ENCODE measurements at regions of chr1 and their contacts with region 1.

Region 1: GRCh38 chr1:226547754-226548191 is 791 bp upstream of the STUM start:
- DNase-seq: peak; percentile 88 to 95
- ATAC-seq: peak; percentile 78 to 92
- H3K4me3 ChIP-seq: peak overlapping the region; percentile 45; the same call in 2 of the 3 replicates
- H3K27ac ChIP-seq: no peak overlapping the region
- H3K4me1 ChIP-seq: peaks cover 19% of the 10 kb centered on the region
- CTCF ChIP-seq: peak; percentile 97
- EP300 ChIP-seq: no peak
- POLR2A ChIP-seq: no peak
- RAD21 ChIP-seq: peak; percentile 80 to 86

Region 2: GRCh38 chr1:226344441-226345259 is 203.1 kb before region 1 on chr1:
- CTCF ChIA-PET with region 1: no interaction called
- POLR2A ChIA-PET with region 1: no interaction called
- DNase-seq: no peak
- ATAC-seq: no peak
- H3K4me3 ChIP-seq: no peak overlapping the region
- H3K27ac ChIP-seq: no peak overlapping the region
- H3K4me1 ChIP-seq: no peaks in the 10 kb centered on the region
- CTCF ChIP-seq: no peak
- EP300 ChIP-seq: no peak
- POLR2A ChIP-seq: no peak
- RAD21 ChIP-seq: no peak

Region 3: GRCh38 chr1:226424228-226425003 is 123.4 kb before region 1 on chr1:
- CTCF ChIA-PET with region 1: interaction called, 36 read pairs
- POLR2A ChIA-PET with region 1: no interaction called
- DNase-seq: peak; percentile 42 to 49
- ATAC-seq: peak; percentile 83 to 91; a peak in 5 of 6 replicates
- H3K4me3 ChIP-seq: no peak overlapping the region
- H3K27ac ChIP-seq: no peak overlapping the region
- H3K4me1 ChIP-seq: no peaks in the 10 kb centered on the region
- CTCF ChIP-seq: peak; percentile 68
- EP300 ChIP-seq: no peak
- POLR2A ChIP-seq: no peak
- RAD21 ChIP-seq: peak; percentile 71 to 73

Region 4: GRCh38 chr1:226441629-226442028 is 106.1 kb before region 1 on chr1:
- CTCF ChIA-PET with region 1: no interaction called
- POLR2A ChIA-PET with region 1: no interaction called
- DNase-seq: no peak
- ATAC-seq: no peak
- H3K4me3 ChIP-seq: no peak overlapping the region
- H3K27ac ChIP-seq: no peak overlapping the region
- H3K4me1 ChIP-seq: no peaks in the 10 kb centered on the region
- CTCF ChIP-seq: no peak
- EP300 ChIP-seq: no peak
- POLR2A ChIP-seq: no peak
- RAD21 ChIP-seq: no peak

Region 5: GRCh38 chr1:226519716-226520598 is 27.8 kb before region 1 on chr1:
- CTCF ChIA-PET with region 1: interaction called, 11 read pairs
- POLR2A ChIA-PET with region 1: no interaction called
- DNase-seq: no peak
- ATAC-seq: peak; percentile 60 to 72; a peak in 5 of 6 replicates
- H3K4me3 ChIP-seq: no peak overlapping the region
- H3K27ac ChIP-seq: no peak overlapping the region
- H3K4me1 ChIP-seq: no peaks in the 10 kb centered on the region
- CTCF ChIP-seq: no peak
- EP300 ChIP-seq: no peak
- POLR2A ChIP-seq: no peak
- RAD21 ChIP-seq: no peak

Region 6: DNA sequence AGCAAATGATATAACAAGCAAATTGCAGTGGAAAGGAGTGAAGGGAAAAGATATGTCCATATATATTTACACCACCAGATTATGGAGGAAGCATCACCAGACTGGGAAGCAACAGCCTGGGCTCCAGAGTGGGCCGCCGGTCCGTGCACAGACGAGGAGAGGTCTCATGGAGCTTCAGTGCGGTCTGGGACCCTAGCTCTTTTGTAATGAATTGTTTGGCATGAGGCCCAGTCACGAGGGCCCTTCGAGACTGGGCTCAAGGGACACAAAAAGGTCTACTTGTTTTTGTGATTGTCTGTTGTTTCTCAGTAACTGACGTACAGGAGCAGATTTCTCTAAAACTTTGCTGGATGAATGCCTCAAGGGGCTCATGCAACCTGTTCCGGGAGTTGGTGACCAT is 12.1 kb before region 1 on chr1:
- CTCF ChIA-PET with region 1: interaction called, 21 read pairs
- POLR2A ChIA-PET with region 1: no interaction called
- DNase-seq: no peak
- ATAC-seq: no peak
- H3K4me3 ChIP-seq: no peak overlapping the region
- H3K27ac ChIP-seq: no peak overlapping the region
- H3K4me1 ChIP-seq: no peaks in the 10 kb centered on the region
- CTCF ChIP-seq: no peak
- EP300 ChIP-seq: no peak
- POLR2A ChIP-seq: no peak
- RAD21 ChIP-seq: no peak

Region 7: GRCh38 chr1:226563666-226564065 is 15.9 kb after region 1 on chr1:
- CTCF ChIA-PET with region 1: interaction called, 17 read pairs
- POLR2A ChIA-PET with region 1: no interaction called
- DNase-seq: no peak
- ATAC-seq: no peak
- H3K4me3 ChIP-seq: no peak overlapping the region
- H3K27ac ChIP-seq: no peak overlapping the region
- H3K4me1 ChIP-seq: no peaks in the 10 kb centered on the region
- CTCF ChIP-seq: no peak
- EP300 ChIP-seq: no peak
- POLR2A ChIP-seq: no peak
- RAD21 ChIP-seq: no peak

Region 8: GRCh38 chr1:226608699-226609505 is 61.1 kb after region 1 on chr1:
- CTCF ChIA-PET with region 1: interaction called, 12 read pairs
- POLR2A ChIA-PET with region 1: no interaction called
- DNase-seq: peak; percentile 63 to 72
- ATAC-seq: peak; percentile 40 to 92; a peak in 4 of 6 replicates
- H3K4me3 ChIP-seq: no peak overlapping the region
- H3K27ac ChIP-seq: no peak overlapping the region
- H3K4me1 ChIP-seq: no peaks in the 10 kb centered on the region
- CTCF ChIP-seq: peak; percentile 73
- EP300 ChIP-seq: no peak
- POLR2A ChIP-seq: no peak
- RAD21 ChIP-seq: peak; percentile 38 to 52; a peak in 4 of 5 replicates

Measured in A549 (cell line).